ENCODE measurements at regions of chr5 and their contacts with region 1.

Region 1: DNA sequence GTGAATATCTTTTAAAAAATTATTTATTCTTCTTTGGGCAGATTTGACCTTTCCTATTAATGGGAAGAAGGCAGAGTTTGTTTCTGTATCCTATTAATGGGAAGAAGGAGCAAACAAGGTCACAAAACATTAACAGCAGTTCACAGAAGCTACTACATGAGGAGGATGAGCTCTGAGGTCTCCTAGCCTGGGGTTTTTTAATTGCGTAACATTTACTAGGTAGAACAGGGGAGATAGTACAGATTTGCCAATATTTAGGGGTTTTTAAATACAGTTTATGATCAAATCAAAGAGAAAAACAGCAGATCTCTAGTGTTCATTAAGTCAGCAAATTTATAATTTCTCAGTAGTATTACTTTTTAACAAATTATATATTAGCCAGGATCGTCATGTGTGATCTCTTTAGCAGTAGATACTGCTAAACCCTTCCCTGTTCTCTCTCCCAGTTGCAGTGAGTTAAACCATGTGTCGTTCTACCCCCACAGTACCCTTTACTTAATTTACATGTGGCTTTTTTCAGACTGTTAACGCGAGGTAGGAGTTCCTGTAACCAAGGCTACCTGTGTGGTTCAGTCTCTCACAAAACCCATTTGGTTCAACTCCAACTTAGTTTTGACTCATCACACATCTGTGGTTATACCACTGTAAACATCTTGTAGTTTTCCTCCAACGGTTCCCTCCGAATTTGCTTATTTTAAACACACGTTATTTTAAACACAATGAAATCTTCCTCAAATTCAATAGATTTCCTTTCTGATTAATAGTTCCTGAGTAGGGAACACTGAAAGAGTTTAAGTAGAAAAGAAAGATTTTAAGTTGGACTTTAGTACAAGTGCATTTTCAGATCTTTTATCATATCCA is 13.3 kb downstream of the SLC25A46 start:
- DNase-seq: peak; percentile 52
- H3K4me3 Mint-ChIP-seq: peak overlapping the region; percentile 64
- H3K27ac Mint-ChIP-seq: peak overlapping the region; percentile 92
- H3K4me1 Mint-ChIP-seq: peaks cover 60% of the 10 kb centered on the region
- H3K27me3 Mint-ChIP-seq: no peaks in the 10 kb centered on the region

Region 2: DNA sequence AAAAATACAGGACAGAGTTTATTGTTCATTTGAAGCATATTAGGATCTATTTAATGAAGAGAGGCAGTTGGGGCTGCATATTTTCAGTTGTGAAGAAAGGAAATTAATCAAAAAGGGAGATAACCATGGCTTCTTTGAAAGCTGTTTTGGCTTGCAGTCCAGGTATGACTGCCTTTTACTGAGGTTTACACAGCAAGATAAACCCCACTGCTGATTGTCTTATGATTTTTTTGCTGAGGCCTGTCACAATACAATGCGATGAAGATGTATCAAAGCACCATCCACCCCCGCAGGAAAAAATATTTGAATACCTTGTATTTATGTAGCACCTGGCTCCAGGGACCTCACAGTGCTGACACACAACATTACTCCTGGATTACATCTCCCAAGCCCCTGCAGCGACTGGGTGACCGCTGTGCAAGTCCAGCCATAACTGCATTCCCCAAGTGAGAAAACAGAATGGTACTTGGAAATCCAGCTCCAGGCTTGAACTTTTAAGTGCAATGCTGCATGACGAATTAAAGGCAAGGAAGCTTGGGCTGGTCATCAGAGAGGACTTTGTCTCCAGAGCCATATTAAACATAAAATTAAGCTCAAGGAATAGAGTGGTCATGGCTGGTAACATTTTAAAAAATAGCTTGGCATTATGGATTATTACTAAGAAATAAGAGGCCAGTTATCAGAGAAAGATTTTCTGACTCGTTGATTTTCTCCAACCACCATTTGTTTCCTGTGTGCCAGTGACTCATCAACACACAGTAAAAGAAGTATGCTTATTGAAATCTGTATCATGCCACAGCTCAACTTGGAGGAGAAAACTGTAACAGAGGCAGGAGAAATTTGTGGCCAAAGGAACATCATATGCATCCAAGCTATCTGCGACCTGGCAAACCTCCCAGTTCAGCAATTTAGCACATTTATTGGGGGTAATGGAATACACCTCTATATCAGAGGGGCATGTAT is 688.2 kb before region 1 on chr5:
- intact Hi-C with region 1: no loop called
- DNase-seq: no peak
- H3K4me3 Mint-ChIP-seq: no peak overlapping the region
- H3K27ac Mint-ChIP-seq: no peak overlapping the region
- H3K4me1 Mint-ChIP-seq: peaks cover 26% of the 10 kb centered on the region
- H3K27me3 Mint-ChIP-seq: no peaks in the 10 kb centered on the region

Region 3: GRCh38 chr5:110687485-110687884 is 64.6 kb before region 1 on chr5:
- intact Hi-C with region 1: loop called (anchors 5 kb)
- DNase-seq: no peak
- H3K4me3 Mint-ChIP-seq: no peak overlapping the region
- H3K27ac Mint-ChIP-seq: no peak overlapping the region
- H3K4me1 Mint-ChIP-seq: peaks cover 10% of the 10 kb centered on the region
- H3K27me3 Mint-ChIP-seq: peaks cover 2% of the 10 kb centered on the region

Region 4: GRCh38 chr5:110738812-110739651 is 13.1 kb before region 1 on chr5 and contains the start of gene SLC25A46:
- intact Hi-C with region 1: loop called (anchors 1 kb)
- DNase-seq: peak; percentile 85
- H3K4me3 Mint-ChIP-seq: peak within 1 kb of the TSS; percentile 97
- H3K27ac Mint-ChIP-seq: peak within 1 kb of the TSS; percentile 96
- H3K4me1 Mint-ChIP-seq: peaks cover 39% of the 10 kb centered on the region
- H3K27me3 Mint-ChIP-seq: peaks cover 11% of the 10 kb centered on the region
- total RNA-seq, gene SLC25A46: 54.6 and 55.4 TPM in 2 replicates

Region 5: GRCh38 chr5:110785326-110785725 is 33.2 kb after region 1 on chr5:
- intact Hi-C with region 1: loop called (anchors 1 kb)
- DNase-seq: no peak
- H3K4me3 Mint-ChIP-seq: no peak overlapping the region
- H3K27ac Mint-ChIP-seq: no peak overlapping the region
- H3K4me1 Mint-ChIP-seq: no peaks in the 10 kb centered on the region
- H3K27me3 Mint-ChIP-seq: no peaks in the 10 kb centered on the region

Region 6: DNA sequence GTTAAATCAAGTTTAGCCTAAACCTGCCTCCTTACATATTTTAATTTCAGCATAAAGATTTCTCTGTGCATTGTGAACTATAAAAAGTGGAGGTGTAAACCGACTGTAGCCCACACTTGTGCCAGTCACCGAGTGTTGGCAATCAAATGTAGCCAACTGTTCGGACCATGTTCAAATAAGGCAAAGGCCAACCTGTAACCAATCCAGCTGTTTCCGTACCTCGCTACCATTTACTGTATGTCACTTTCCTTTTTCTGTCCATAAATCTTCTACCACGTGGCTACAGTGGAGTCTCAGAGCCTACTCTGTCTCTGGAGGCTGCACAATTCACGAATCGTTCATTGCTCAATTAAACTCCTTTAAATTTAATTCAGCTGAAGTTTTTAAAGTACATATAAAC is 142.7 kb after region 1 on chr5:
- intact Hi-C with region 1: no loop called
- DNase-seq: no peak
- H3K4me3 Mint-ChIP-seq: no peak overlapping the region
- H3K27ac Mint-ChIP-seq: no peak overlapping the region
- H3K4me1 Mint-ChIP-seq: no peaks in the 10 kb centered on the region
- H3K27me3 Mint-ChIP-seq: peaks cover 3% of the 10 kb centered on the region

Region 7: GRCh38 chr5:111229871-111230810 is 478.0 kb after region 1 on chr5:
- intact Hi-C with region 1: loop called (anchors 2 kb)
- DNase-seq: no peak
- H3K4me3 Mint-ChIP-seq: peak overlapping the region; percentile 79
- H3K27ac Mint-ChIP-seq: peak overlapping the region; percentile 96
- H3K4me1 Mint-ChIP-seq: peaks cover 97% of the 10 kb centered on the region
- H3K27me3 Mint-ChIP-seq: no peaks in the 10 kb centered on the region

Region 8: DNA sequence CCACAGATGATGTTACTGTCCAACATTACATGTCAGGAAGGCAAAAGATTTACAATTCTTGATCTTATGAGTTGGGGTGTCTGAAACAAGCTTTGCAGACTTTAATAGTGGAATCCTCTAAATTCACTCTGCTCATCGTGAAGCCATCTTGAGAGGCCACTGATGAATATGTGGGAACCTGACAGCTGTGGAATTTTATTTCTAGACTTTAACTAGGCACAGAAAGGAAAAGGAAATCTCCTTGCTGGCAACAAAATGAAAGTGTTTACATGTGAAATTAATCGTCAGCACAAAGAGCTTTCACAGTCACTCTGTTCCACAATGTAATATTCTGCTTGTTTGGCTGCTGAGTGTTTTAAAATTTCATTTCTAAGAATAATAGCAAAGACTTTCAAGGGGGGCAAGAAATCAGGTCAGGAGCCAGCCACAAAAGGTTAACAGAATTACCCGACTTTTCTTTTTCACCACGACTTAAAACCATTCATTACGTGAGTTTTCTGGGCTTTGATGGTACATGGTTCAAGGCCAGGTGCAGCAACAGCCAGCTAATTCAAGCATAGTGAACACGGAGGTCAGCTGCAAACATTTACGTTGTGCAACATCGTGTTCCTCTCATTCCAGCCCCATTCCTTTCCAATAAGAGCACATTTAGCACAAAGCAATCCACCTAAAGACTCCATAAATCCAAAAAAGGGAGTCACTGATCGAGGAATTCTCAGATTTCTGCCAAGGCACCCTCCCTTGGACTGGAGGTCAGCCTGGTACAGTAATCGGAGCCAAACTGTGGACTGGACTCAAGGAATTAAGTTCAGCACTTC is 990.3 kb after region 1 on chr5:
- intact Hi-C with region 1: loop called (anchors 5 kb)
- DNase-seq: no peak
- H3K4me3 Mint-ChIP-seq: peak overlapping the region; percentile 40
- H3K27ac Mint-ChIP-seq: peak overlapping the region; percentile 7
- H3K4me1 Mint-ChIP-seq: peaks cover 53% of the 10 kb centered on the region
- H3K27me3 Mint-ChIP-seq: no peaks in the 10 kb centered on the region

Measured in activated T-helper 1 cell treated with anti-CD3 and anti-CD28 coated beads, Interleukin-12 subunit alpha, Interleukin-12 subunit beta, Interleukin-2, Interleukin-4 antibody, amounts not matched to agents 30 ng/mL and 10 ng/mL and 1 ng/mL, durations not matched to agents 14 hours and 24 hours and 36 hours (primary cell).